Heart right ventricle (tissue), 16 donors: ENCODE measurements at regions of chr6 and their contacts with region 1.

Region 1: DNA sequence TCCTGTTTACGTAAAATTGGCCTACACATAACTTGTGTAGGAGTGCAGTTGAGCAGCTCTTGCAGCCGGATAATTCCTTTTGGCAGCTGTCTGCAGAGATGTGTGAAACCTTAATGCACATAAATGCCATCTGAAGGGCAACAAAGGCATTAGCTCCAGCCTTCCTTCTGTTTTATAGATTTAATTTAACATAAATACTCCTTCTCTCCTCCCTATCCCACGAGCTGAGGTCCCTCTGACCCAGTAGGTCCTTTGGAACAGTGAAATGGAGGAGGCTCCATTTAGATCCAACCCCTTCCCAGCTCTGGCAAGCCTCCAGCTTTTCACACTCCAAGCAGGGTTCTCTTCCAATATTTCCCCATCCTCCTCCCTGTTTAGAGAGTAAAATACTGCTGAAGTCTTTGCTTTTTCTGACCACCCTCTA is 6.5 kb downstream of the PLEKHG1 start:
- DNase-seq: no peak
- ATAC-seq: peak in 1 of 8 donors; percentile 42
- H3K4me3 ChIP-seq: no peak overlapping the region
- H3K27ac ChIP-seq: peak overlapping the region in 3 of 10 donors; percentile 46 to 57 (median 50)
- H3K4me1 ChIP-seq: peaks cover 0 to 62% (median 10%) of the 10 kb centered on the region in 9 donors
- H3K27me3 ChIP-seq: peaks cover 0 to 16% (median 5%) of the 10 kb centered on the region in 7 donors
- CTCF ChIP-seq: no peak

Region 2: DNA sequence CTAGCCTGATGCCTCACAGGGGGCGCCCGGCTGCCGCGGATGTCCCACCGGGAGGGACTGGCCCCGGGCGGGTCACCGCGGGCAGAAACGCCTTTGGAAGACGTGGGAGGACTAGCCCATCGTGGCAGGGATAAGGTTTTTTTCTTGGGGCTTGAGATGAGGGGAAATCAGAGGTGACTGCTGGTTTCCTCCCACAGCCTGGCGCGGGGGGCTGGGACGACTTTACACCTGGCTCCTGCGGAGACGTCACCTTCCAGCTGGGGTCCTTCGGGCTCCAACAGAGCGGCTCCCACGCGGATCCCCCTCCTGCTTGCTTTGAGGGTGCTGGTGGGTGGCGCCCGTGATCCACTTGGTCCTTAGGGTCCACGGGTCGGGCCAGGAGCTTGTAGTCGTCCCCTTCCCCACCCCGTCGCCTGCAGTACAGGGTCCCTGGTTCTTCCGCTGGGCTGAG is 548.7 kb before region 1 on chr6:
- intact Hi-C with region 1: no loop called
- DNase-seq: no peak
- ATAC-seq: no peak
- H3K4me3 ChIP-seq: no peak overlapping the region
- H3K27ac ChIP-seq: no peak overlapping the region
- H3K4me1 ChIP-seq: no peaks in the 10 kb centered on the region
- H3K27me3 ChIP-seq: peaks cover 0 to 50% (median 29%) of the 10 kb centered on the region in 7 donors
- CTCF ChIP-seq: no peak

Region 3: DNA sequence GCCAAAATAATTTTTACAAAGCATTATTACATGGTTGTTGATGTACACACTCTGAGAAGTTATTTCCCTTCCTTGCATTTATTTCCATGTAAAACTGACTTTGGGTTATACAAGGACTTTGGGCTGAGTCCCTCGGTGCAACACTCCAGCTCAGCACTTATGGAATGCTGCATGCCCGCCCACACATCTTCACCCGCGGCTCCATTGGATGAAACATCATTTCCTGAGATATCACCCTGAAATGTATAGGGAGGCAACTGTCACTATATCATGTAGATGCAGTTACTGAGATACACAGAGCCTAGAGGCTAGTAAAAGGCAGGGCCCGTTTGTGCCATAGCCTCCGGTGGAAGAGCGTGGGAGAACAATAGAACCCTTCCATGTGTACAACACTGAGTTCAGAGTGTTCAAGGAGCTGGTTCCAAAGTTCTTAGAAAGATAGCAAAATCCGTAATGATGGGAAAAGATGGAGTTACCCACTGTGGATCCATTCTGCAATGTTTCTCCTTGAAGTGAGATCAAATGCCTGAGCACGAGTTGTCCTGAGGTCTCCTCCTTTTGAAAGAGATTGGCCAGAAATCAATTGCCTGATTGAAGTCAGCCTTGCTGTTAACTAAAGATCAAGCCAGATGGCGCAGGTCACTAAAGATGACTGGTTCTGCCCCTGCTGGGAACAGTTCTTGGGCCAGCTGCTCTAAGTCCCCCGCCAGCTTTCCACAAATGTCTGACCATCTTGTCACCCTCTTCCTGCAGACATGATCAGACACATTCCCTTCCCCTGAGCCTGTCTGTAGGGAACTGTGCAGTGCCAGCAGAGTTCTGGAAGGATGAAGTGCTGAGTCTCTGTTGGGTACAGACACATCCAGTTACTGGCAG is 338.3 kb before region 1 on chr6:
- intact Hi-C with region 1: no loop called
- DNase-seq: no peak
- ATAC-seq: no peak
- H3K4me3 ChIP-seq: no peak overlapping the region
- H3K27ac ChIP-seq: no peak overlapping the region
- H3K4me1 ChIP-seq: no peaks in the 10 kb centered on the region
- H3K27me3 ChIP-seq: no peaks in the 10 kb centered on the region
- CTCF ChIP-seq: no peak

Region 4: GRCh38 chr6:150579611-150580010 is 26.6 kb before region 1 on chr6:
- intact Hi-C with region 1: no loop called
- DNase-seq: peak in 1 of 2 donors; percentile 39
- ATAC-seq: peak in 5 of 8 donors; percentile 29 to 83 (median 54)
- H3K4me3 ChIP-seq: no peak overlapping the region
- H3K27ac ChIP-seq: no peak overlapping the region
- H3K4me1 ChIP-seq: peaks cover 0 to 15% (median 0%) of the 10 kb centered on the region in 9 donors
- H3K27me3 ChIP-seq: peaks cover 0 to 9% (median 0%) of the 10 kb centered on the region in 7 donors
- CTCF ChIP-seq: no peak

Region 5: DNA sequence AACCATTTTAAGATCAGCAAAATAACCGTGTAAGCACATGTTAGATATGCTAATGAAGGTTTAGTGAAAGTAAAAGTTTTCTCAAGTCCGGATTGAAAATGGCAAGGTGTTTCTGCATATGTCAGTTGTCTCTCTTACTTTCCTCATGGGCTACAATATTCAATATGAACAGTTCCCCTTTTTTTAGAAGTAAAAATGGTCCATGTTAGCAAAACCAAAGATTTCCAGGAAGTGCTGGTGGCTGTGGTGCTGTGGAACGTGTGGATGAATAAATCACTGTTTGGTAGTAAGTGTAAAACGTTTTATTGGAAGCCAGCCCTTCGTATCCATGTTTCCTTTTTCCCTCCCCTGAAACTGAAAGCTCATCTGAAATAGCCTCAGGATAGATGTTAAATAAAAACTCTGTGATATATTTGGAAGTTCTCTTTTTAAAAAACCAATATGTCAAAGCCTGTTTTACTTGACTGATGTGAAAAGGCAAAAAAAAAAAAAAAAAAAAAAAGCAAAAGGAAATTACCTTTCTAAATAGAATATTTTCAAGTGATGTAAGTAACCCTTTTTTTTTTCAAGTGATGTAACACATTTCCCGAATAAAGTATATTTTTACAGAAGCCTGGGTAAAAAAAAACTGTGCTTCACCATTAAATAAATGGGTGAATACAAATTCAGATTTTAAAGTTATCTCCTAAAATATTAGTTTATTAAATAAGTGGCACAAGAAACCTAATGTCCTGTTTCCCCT is 35.4 kb after region 1 on chr6:
- intact Hi-C with region 1: no loop called
- DNase-seq: no peak
- ATAC-seq: peak in 6 of 8 donors; percentile 27 to 64 (median 51)
- H3K4me3 ChIP-seq: peak overlapping the region in 8 of 10 donors; percentile 4 to 33 (median 18)
- H3K27ac ChIP-seq: peak overlapping the region in 7 of 10 donors; percentile 3 to 41 (median 33)
- H3K4me1 ChIP-seq: peaks cover 0 to 36% (median 16%) of the 10 kb centered on the region in 9 donors
- H3K27me3 ChIP-seq: no peaks in the 10 kb centered on the region
- CTCF ChIP-seq: no peak

Region 6: GRCh38 chr6:150659046-150659763 is 53.0 kb after region 1 on chr6:
- intact Hi-C with region 1: loop called in 1 of 10 experiments (anchors 5 kb)
- DNase-seq: no peak
- ATAC-seq: no peak
- H3K4me3 ChIP-seq: no peak overlapping the region
- H3K27ac ChIP-seq: peak overlapping the region in 1 of 10 donors; percentile 18
- H3K4me1 ChIP-seq: peaks cover 0 to 19% (median 0%) of the 10 kb centered on the region in 9 donors
- H3K27me3 ChIP-seq: no peaks in the 10 kb centered on the region
- CTCF ChIP-seq: no peak

Region 7: GRCh38 chr6:150667977-150668716 is 62.0 kb after region 1 on chr6:
- intact Hi-C with region 1: loop called in 1 of 10 experiments (anchors 5 kb)
- DNase-seq: peak; percentile 83 to 95
- ATAC-seq: peak; percentile 88 to 98 (median 96)
- H3K4me3 ChIP-seq: no peak overlapping the region
- H3K27ac ChIP-seq: peak overlapping the region in 9 of 10 donors; percentile 8 to 79 (median 57)
- H3K4me1 ChIP-seq: peaks cover 0 to 54% (median 28%) of the 10 kb centered on the region in 9 donors
- H3K27me3 ChIP-seq: no peaks in the 10 kb centered on the region
- CTCF ChIP-seq: peak in 6 of 9 donors; percentile 23 to 62 (median 38)